Activated B cell treated with CpG ODN at 0.5 μM for 24 hours (primary cell): ENCODE measurements at regions of chr11 and their contacts with region 1.

Region 1: DNA sequence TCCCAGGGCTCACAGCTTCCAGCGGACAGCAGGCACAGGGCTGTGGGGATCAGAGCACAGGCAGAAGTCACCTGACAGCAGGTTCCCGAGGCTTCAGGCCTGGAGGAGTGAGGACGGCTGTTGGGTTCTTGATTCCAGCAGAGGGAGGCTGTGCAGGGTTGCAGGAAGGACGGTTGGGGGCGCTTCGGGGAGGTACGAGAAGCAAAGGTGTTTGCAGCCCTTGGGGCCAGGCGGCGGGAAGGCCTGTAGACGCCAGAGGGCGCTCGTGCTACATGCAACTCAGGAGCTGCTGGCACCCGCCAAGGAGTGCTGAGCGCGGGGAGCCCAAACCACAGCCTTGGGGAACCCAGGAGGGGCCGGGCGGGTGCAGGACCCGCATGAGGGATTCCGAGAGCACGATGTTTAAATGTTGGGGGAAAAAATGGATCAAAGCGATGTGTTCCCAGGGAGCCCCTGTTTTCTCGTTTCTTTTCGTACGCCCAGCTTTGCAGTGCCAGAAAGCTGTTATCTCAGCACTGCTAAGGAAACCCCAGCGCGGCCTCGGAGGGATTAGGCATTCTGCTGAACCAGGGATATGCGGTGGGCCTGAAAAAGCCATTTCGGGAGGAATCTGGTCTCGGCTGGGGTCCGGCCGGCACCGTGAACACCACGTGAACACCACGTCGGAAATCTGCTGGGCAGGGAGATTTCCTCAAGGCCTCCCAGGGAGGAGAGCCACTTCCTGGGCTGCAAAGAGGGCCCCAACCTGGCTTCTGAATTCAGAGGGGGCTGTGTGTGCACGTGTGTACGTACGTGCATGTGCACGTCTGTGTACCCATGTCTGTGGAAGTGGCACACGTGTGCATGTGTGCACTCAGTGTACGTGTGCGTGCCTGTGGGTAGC is 88.1 kb downstream of the KCNQ1 start:
- DNase-seq: peak; percentile 89
- ATAC-seq: peak; percentile 88
- H3K4me3 Mint-ChIP-seq: peak overlapping the region; percentile 64
- H3K27ac Mint-ChIP-seq: no peak overlapping the region
- H3K4me1 Mint-ChIP-seq: peaks cover 19% of the 10 kb centered on the region
- H3K27me3 Mint-ChIP-seq: peaks cover 2% of the 10 kb centered on the region
- CTCF ChIP-seq: no peak

Region 2: GRCh38 chr11:2196970-2197770 is 335.8 kb before region 1 on chr11:
- CTCF ChIA-PET with region 1: interaction called, 3 read pairs
- POLR2A ChIA-PET with region 1: no interaction called
- intact Hi-C with region 1: loop called (anchors 1 kb)
- DNase-seq: peak; percentile 61
- ATAC-seq: peak; percentile 97
- H3K4me3 Mint-ChIP-seq: no peak overlapping the region
- H3K27ac Mint-ChIP-seq: peak overlapping the region; percentile 9
- H3K4me1 Mint-ChIP-seq: peaks cover 6% of the 10 kb centered on the region
- H3K27me3 Mint-ChIP-seq: peaks cover 10% of the 10 kb centered on the region
- CTCF ChIP-seq: peak; percentile 31

Region 3: GRCh38 chr11:2420502-2421225 is 112.3 kb before region 1 on chr11:
- CTCF ChIA-PET with region 1: interaction called, 102 read pairs
- POLR2A ChIA-PET with region 1: no interaction called
- intact Hi-C with region 1: no loop called
- DNase-seq: peak; percentile 69
- ATAC-seq: peak; percentile 97
- H3K4me3 Mint-ChIP-seq: no peak overlapping the region
- H3K27ac Mint-ChIP-seq: no peak overlapping the region
- H3K4me1 Mint-ChIP-seq: peaks cover 6% of the 10 kb centered on the region
- H3K27me3 Mint-ChIP-seq: no peaks in the 10 kb centered on the region
- CTCF ChIP-seq: peak; percentile 32

Region 4: DNA sequence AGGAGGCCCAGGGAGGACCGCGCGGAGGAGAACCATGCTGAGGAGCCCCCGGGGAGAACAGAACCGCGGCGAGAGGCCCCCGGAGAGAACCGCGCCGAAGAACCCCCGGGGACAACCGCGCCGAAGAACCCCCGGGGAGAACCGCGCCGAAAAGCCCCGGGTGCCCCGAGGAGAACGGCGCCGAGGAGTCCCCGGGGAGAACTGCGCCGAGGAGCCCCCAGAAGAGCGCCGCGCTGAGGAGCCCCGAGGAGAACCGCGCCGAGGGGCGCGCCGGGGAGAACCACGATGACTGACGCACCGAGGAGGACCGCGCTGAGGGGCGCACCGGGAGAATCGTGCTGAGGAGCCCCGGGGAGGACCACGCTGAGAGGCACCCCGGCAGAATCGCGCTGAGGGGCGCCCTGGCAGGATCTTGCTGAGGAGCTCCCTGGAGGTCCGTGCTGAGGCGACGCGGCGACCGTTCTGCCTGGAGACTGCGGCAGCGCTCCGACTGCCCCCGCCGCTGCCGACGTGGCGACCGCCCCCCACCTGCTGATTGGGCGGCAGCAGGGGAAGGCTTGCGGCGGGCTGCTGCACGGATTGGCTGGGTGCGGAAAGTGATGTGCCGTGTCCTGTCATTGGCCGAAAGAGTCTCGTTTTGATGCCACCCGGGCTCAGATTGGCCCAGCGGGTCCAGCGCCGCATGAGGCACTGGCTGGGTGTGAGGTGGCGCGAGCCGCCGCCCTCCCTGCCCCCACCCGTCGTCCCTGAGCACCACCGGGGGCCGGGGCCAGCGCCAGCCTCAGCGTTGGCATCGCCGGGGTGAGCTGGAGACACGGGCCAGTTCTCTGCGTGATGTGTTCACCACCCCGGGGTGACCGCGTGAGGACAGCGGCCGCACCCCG is 166.8 kb after region 1 on chr11 and contains the start of gene KCNQ1OT1:
- CTCF ChIA-PET with region 1: interaction called, 3 read pairs
- POLR2A ChIA-PET with region 1: no interaction called
- intact Hi-C with region 1: loop called (anchors 10 kb)
- DNase-seq: peak; percentile 77
- ATAC-seq: peak; percentile 94
- H3K4me3 Mint-ChIP-seq: peak within 1 kb of the TSS; percentile 85
- H3K27ac Mint-ChIP-seq: peak within 1 kb of the TSS; percentile 70
- H3K4me1 Mint-ChIP-seq: peaks cover 47% of the 10 kb centered on the region
- H3K27me3 Mint-ChIP-seq: no peaks in the 10 kb centered on the region
- CTCF ChIP-seq: no peak
- total RNA-seq, gene KCNQ1OT1: 0.88 and 1.2 TPM in 2 replicates

Region 5: GRCh38 chr11:2768471-2769408 is 235.8 kb after region 1 on chr11:
- CTCF ChIA-PET with region 1: no interaction called
- POLR2A ChIA-PET with region 1: no interaction called
- intact Hi-C with region 1: no loop called
- DNase-seq: no peak
- ATAC-seq: no peak
- H3K4me3 Mint-ChIP-seq: no peak overlapping the region
- H3K27ac Mint-ChIP-seq: no peak overlapping the region
- H3K4me1 Mint-ChIP-seq: no peaks in the 10 kb centered on the region
- H3K27me3 Mint-ChIP-seq: no peaks in the 10 kb centered on the region
- CTCF ChIP-seq: no peak

Region 6: DNA sequence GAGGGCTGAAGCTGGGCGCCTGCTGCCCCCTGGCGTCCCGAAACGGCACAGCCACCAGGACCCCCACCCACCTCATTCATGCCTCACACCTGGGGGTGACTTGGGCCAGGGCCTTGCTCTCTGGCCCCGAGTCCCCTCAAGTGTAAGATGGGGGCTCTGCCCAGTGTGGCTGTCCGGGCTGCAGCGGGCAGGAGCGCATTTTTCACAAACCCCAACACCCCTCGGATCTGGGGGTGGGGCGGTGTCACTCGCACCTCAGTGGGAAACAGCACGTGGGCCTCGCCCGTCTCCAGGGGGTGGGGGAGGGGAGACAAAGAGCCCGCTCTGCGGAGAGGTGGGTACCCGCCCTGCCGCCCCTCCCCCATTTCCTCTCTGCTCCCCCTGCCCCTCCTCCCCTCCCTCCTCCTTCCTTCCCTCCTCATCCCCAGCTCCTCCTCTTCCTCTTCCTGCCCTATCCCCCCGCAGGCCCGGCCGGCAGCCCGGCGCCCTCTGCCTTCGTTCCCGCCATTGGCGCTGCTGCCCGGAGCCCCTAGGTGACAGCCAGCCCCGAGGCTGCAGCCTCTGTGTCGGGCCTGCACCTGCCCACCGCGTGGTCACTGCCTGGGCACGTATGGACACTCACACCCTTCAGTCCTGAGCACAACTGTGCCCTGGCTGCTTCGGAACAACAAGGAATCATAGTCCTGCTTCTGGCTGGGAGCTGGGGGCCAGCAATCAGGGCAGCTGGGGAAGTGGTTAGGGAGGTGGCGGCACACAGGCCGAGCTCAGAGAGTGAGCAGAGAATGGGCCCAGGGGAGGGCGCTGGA is 359.5 kb after region 1 on chr11:
- CTCF ChIA-PET with region 1: interaction called, 334 read pairs
- POLR2A ChIA-PET with region 1: interaction called, 24 read pairs
- intact Hi-C with region 1: loop called (anchors 1 kb)
- DNase-seq: peak; percentile 61
- ATAC-seq: peak; percentile 68
- H3K4me3 Mint-ChIP-seq: peak overlapping the region; percentile 72
- H3K27ac Mint-ChIP-seq: no peak overlapping the region
- H3K4me1 Mint-ChIP-seq: peaks cover 15% of the 10 kb centered on the region
- H3K27me3 Mint-ChIP-seq: no peaks in the 10 kb centered on the region
- CTCF ChIP-seq: peak; percentile 74

Region 7: DNA sequence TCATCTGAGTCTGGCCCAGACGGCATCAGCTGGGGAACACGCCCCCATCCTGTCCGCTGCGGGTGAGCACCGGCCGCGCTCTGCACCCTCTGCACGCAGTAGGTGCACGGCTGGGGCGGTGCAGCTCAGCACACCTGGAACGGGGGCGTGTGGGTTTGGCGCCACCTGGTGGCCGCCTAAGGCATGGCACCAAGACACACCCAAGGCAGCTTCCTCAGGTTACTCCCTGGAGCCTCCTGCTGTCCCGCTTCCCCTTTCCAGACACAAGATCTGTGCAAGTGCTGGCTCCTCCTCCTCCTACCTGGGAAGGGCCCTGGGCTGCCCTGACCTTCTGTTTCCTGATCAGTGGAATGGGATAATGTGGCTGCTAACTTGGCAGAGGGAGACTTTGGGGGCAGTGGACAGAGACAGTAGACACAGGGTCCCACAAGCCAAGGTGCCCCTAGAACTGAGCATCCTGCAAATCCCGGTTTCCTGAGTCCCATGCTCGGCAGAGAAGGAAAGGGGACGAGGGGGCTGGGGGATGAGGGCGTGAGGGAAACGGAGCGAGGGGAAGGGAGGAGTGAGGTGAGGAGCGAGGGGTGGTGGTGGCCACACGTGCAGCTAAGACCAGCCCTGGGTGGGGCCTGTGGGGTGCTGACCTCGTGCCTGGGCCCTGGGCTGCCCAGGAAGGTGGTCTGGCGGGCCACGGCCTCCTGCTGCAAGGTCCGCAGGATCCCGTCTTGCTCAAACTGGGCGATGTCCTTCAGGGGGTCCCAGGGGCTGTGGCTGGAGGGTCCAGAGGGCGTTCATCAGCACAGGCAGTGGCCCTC is 559.1 kb after region 1 on chr11:
- CTCF ChIA-PET with region 1: interaction called, 55 read pairs
- POLR2A ChIA-PET with region 1: interaction called, 5 read pairs
- intact Hi-C with region 1: loop called (anchors 1 kb)
- DNase-seq: peak; percentile 73
- ATAC-seq: peak; percentile 89
- H3K4me3 Mint-ChIP-seq: no peak overlapping the region
- H3K27ac Mint-ChIP-seq: no peak overlapping the region
- H3K4me1 Mint-ChIP-seq: peaks cover 2% of the 10 kb centered on the region
- H3K27me3 Mint-ChIP-seq: peaks cover 3% of the 10 kb centered on the region
- CTCF ChIP-seq: peak; percentile 87

Region 8: DNA sequence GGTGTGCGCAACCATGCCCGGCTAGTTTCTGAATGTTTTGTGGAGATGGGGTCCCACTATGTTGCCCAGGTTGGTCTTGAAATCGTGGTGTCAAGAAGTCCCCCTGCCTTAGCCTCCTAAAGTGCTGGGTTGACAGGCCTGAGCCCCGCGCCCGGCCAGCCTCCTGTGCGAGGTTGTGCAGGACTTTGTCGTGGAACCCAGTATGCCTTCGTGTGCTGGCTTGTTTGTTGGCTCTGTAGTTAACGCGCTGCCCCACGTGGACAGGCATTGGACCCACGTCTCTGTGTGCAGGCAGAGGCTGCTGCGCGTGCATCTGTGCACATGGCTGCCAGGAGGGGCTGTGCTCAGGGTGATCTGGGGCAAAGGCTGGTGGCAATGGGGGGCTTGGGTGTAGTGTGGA is 879.9 kb after region 1 on chr11:
- CTCF ChIA-PET with region 1: interaction called, 4 read pairs
- POLR2A ChIA-PET with region 1: no interaction called
- intact Hi-C with region 1: loop called (anchors 2 kb)
- DNase-seq: no peak
- ATAC-seq: no peak
- H3K4me3 Mint-ChIP-seq: no peak overlapping the region
- H3K27ac Mint-ChIP-seq: no peak overlapping the region
- H3K4me1 Mint-ChIP-seq: peaks cover 5% of the 10 kb centered on the region
- H3K27me3 Mint-ChIP-seq: no peaks in the 10 kb centered on the region
- CTCF ChIP-seq: no peak